ENCODE measurements at regions of chr9 and their contacts with region 1.

Region 1: GRCh38 chr9:133023117-133023890 is 7.5 kb upstream of the GTF3C5 start:
- DNase-seq: peak; percentile 25 to 63 (median 55)
- H3K4me3 ChIP-seq: no peak overlapping the region
- H3K27ac ChIP-seq: no peak overlapping the region
- H3K4me1 ChIP-seq: peaks cover 0 to 19% (median 15%) of the 10 kb centered on the region in 4 experiments
- H3K27me3 ChIP-seq: no peaks in the 10 kb centered on the region

Region 2: DNA sequence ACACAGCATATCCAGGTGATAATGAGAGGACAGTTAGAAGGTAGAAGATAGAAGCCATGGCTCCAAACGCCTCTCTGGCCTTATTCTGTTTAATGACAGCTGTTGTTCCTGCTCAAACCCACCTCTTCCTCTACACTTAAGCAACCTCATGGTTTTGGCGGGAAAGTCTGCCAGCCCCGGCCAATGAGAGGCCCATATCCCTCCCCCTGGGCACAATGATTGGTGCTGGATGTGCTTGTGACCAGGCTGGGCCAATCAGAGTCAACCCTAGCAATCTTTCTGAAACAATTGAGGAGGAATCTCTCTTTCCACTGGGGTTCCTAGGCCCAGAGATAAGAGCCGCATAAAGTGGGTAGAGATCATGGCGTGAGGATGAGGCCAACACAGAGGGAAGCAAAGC is 49.6 kb before region 1 on chr9:
- CTCF ChIA-PET with region 1: interaction called, 89 read pairs
- POLR2A ChIA-PET with region 1: interaction called, 5 read pairs
- DNase-seq: peak in 2 of 3 donors; percentile 68 to 75
- H3K4me3 ChIP-seq: no peak overlapping the region
- H3K27ac ChIP-seq: no peak overlapping the region
- H3K4me1 ChIP-seq: peaks cover 8 to 36% (median 28%) of the 10 kb centered on the region in 4 experiments
- H3K27me3 ChIP-seq: no peaks in the 10 kb centered on the region

Region 3: GRCh38 chr9:132982458-132982857 is 40.8 kb before region 1 on chr9:
- CTCF ChIA-PET with region 1: interaction called, 89 read pairs
- POLR2A ChIA-PET with region 1: interaction called, 5 read pairs
- DNase-seq: peak in 2 of 3 donors; percentile 72 to 81
- H3K4me3 ChIP-seq: peak overlapping the region in 5 of 7 experiments; percentile 42 to 97 (median 51)
- H3K27ac ChIP-seq: peak overlapping the region in 1 of 2 experiments; percentile 83
- H3K4me1 ChIP-seq: peaks cover 22 to 98% (median 85%) of the 10 kb centered on the region in 4 experiments
- H3K27me3 ChIP-seq: no peaks in the 10 kb centered on the region

Region 4: DNA sequence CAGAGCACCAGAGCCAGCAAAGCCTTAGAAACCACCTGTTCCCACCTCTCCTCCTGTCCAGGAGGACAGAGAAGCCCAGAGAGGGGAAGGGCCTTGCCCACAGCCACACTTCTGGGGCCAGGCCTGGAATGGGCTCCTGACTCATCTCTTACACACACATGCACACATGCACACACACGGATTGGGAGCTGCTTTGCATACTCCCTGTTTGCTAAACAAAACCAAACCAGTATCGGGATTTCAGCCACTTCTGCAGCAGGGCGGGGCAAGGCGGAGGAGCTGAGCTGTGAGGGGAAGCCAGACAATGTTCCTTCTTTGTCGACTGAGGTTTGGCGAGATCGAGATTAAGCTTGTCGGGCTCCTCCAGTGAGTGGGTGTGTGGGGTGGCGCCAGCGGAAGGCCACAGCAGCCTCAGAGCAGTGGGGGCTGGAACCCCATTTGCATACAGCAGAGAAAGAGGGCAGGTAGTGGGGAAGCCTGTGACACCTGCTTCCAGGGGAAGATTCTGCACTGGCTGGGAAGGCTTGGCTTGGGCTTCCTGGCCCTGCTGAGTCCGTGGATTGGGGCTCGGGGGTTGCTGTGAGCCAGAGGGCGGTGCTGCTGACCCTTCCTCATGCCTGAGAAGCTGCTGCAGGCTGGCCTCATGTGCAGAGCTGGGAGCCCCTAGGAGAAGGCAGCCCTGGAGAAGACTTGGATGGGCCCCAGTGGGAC is 28.7 kb before region 1 on chr9:
- CTCF ChIA-PET with region 1: interaction called, 21 read pairs
- POLR2A ChIA-PET with region 1: no interaction called
- DNase-seq: peak; percentile 69 to 88 (median 74)
- H3K4me3 ChIP-seq: peak overlapping the region in 3 of 7 experiments; percentile 25 to 39 (median 30)
- H3K27ac ChIP-seq: peak overlapping the region in 1 of 2 experiments; percentile 63
- H3K4me1 ChIP-seq: peaks cover 16 to 89% (median 79%) of the 10 kb centered on the region in 4 experiments
- H3K27me3 ChIP-seq: no peaks in the 10 kb centered on the region

Region 5: GRCh38 chr9:133004091-133004998 is 19.0 kb before region 1 on chr9:
- CTCF ChIA-PET with region 1: interaction called, 98 read pairs
- POLR2A ChIA-PET with region 1: interaction called, 21 read pairs
- DNase-seq: peak; percentile 95 to 99 (median 98)
- H3K4me3 ChIP-seq: peak overlapping the region in 6 of 7 experiments; percentile 29 to 66 (median 35)
- H3K27ac ChIP-seq: peak overlapping the region; percentile 77 to 89
- H3K4me1 ChIP-seq: peaks cover 9 to 95% (median 84%) of the 10 kb centered on the region in 4 experiments
- H3K27me3 ChIP-seq: no peaks in the 10 kb centered on the region

Region 6: DNA sequence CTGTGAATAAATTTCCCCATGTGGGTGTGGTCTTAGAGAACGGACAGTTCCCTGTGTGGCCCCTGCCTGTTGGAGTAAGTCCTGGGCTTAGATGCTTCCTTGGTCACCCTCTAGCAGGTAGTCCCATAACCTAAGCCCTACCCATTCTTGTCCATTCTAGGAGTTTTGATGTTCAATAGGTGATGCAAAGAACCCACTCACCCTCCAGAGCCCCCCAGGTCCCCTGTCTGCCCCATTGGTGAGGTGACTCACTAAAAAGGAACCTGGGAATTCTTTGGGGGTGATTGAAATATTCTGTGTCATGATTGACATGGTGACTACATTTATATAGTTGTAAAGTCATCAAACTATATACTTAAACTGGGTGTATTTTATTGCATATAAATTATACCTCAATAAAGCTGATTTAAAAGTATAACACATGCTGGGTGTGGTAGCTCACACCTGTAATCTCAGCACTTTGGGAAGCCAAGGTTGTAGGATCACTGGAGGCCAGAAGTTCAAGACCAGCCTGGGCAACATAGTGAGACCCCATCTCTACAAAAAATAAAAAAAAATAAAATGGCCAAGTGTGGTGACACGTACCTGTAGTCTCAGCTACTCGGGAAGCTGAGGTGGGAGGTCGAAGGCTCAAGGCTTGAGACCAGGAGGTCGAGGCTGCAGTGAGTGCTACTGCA is 13.3 kb before region 1 on chr9:
- CTCF ChIA-PET with region 1: interaction called, 98 read pairs
- POLR2A ChIA-PET with region 1: interaction called, 21 read pairs
- DNase-seq: no peak
- H3K4me3 ChIP-seq: no peak overlapping the region
- H3K27ac ChIP-seq: no peak overlapping the region
- H3K4me1 ChIP-seq: peaks cover 4 to 47% (median 32%) of the 10 kb centered on the region in 4 experiments
- H3K27me3 ChIP-seq: no peaks in the 10 kb centered on the region

Region 7: GRCh38 chr9:133121198-133121939 is 98.1 kb after region 1 on chr9 and contains the start of gene RALGDS:
- CTCF ChIA-PET with region 1: no interaction called
- POLR2A ChIA-PET with region 1: no interaction called
- DNase-seq: peak; percentile 85 to 93 (median 92)
- H3K4me3 ChIP-seq: peak within 1 kb of the TSS; percentile 33 to 80 (median 68)
- H3K27ac ChIP-seq: peak within 1 kb of the TSS; percentile 68 to 74
- H3K4me1 ChIP-seq: peaks cover 0 to 94% (median 81%) of the 10 kb centered on the region in 4 experiments
- H3K27me3 ChIP-seq: no peaks in the 10 kb centered on the region

Measured in common myeloid progenitor, CD34-positive (primary cell).